Activated CD4-positive, alpha-beta memory T cell treated with anti-CD3 and anti-CD28 coated beads for 36 hours (primary cell): ENCODE measurements at regions of chr7 and their contacts with region 1.

Region 1: DNA sequence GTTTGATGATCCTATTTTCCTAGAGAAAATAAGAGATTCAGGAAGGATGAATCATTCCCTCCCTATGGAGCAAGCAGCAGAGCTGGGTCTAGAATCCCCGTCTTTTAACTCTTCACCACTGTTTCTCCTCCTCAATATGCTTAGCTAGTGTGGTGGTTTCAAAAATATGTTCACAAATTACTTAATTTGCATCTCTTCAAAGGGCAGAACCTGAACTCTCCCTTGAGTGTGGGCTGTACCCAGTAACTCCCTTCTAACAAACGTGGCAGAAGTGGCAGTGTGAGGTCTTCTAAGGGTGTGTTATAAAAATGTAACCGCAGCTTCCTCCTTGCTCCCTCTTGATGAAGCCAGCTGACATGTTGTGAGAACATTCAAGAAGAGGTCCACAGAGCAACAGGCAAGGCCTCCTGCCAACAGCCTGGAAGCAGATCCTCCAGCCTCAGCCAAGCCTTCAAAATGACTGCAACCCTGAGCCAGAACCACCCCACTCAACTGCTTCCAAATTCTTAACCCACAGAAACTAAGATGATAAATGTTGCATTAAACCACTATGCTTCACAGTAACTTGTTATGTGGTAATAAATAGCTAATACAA is 36.6 kb downstream of the SRPK2 start:
- DNase-seq: peak; percentile 68
- H3K4me3 Mint-ChIP-seq: peak overlapping the region; percentile 42
- H3K27ac Mint-ChIP-seq: peak overlapping the region; percentile 94
- H3K4me1 Mint-ChIP-seq: peaks cover 58% of the 10 kb centered on the region
- H3K27me3 Mint-ChIP-seq: no peaks in the 10 kb centered on the region

Region 2: DNA sequence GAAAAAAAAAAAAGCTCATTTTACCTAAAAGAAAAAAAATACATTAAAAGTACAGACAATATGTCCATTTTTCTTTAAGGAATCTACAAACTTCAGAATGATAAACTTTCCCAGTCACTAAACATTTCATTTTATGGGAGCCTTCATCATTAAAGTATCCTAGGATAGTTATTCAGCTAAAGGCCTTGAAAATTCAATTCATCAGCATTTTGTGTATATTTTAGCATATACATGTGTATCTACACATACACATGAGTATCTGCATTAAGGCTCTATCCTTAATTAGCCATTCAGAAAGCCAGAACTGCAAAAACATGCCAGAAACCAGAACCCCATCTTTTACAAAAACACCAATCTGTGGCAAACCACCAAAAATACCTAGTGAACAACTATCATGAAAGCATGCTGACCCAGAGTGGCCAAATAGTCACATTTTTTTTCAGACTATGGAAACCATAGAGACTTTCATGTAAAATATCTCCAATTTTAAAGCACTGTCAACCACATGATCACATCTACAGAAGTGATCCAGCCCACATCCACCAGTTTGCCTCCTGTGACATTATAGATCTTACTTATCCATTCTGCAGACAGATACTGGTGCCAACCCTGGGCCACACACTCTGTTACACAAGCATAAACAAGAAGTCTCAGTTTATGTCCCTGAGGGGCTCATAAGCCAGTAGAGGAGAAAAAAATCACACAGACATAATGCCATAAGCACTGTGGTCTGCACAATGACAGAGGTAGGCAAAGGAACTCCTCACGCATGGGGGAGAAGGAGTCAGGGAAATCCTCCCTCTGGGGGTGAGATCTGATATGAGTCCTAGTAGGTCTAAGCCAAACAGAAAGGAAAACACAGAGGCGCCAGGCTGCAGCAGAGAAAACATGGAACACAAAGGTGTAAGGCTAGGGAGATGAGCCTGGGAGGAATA is 42.6 kb before region 1 on chr7:
- CTCF ChIA-PET with region 1: no interaction called
- POLR2A ChIA-PET with region 1: interaction called, 3 read pairs
- intact Hi-C with region 1: loop called (anchors 1 kb)
- DNase-seq: peak; percentile 31
- H3K4me3 Mint-ChIP-seq: no peak overlapping the region
- H3K27ac Mint-ChIP-seq: peak overlapping the region; percentile 4
- H3K4me1 Mint-ChIP-seq: peaks cover 64% of the 10 kb centered on the region
- H3K27me3 Mint-ChIP-seq: no peaks in the 10 kb centered on the region

Region 3: GRCh38 chr7:105387621-105388372 is 35.7 kb after region 1 on chr7:
- CTCF ChIA-PET with region 1: interaction called, 4 read pairs
- POLR2A ChIA-PET with region 1: interaction called, 4 read pairs
- intact Hi-C with region 1: loop called (anchors 5 kb)
- DNase-seq: peak; percentile 61
- H3K4me3 Mint-ChIP-seq: peak overlapping the region; percentile 81
- H3K27ac Mint-ChIP-seq: peak overlapping the region; percentile 59
- H3K4me1 Mint-ChIP-seq: peaks cover 32% of the 10 kb centered on the region
- H3K27me3 Mint-ChIP-seq: no peaks in the 10 kb centered on the region